Left cardiac atrium (tissue), 4 donors: ENCODE measurements at regions of chr22 and their contacts with region 1.

Region 1: DNA sequence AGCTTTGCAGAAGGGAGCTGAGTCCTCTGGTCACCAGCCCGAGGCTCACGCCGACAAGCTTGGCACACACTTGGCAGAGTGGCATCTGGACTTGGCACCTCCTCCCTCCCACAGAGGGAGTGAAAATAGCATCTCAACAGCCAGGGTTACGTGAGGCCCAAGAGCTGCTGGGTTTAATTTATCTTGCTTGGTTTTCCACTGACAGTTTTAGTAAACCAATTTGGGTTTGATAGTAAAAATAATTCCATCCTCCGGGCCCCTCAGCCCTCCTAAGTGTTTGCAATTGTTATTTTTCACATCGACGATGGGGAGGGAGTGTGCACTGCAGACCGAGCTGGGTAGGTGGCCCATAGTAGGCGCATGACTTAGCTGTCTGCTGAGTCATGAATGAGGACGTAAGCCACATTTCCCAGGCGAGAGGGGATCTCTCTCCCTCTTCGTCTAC is 107.6 kb upstream of the ASPHD2 start:
- DNase-seq: peak; percentile 41
- ATAC-seq: peak; percentile 94 to 98

Region 2: GRCh38 chr22:26086359-26086758 is 235.1 kb before region 1 on chr22:
- intact Hi-C with region 1: loop called in 1 of 2 experiments (anchors 10 kb)
- DNase-seq: no peak
- ATAC-seq: no peak

Region 3: GRCh38 chr22:26172389-26172990 is 149.0 kb before region 1 on chr22:
- intact Hi-C with region 1: loop called in 1 of 2 experiments (anchors 10 kb)
- DNase-seq: peak; percentile 32
- ATAC-seq: no peak

Region 4: DNA sequence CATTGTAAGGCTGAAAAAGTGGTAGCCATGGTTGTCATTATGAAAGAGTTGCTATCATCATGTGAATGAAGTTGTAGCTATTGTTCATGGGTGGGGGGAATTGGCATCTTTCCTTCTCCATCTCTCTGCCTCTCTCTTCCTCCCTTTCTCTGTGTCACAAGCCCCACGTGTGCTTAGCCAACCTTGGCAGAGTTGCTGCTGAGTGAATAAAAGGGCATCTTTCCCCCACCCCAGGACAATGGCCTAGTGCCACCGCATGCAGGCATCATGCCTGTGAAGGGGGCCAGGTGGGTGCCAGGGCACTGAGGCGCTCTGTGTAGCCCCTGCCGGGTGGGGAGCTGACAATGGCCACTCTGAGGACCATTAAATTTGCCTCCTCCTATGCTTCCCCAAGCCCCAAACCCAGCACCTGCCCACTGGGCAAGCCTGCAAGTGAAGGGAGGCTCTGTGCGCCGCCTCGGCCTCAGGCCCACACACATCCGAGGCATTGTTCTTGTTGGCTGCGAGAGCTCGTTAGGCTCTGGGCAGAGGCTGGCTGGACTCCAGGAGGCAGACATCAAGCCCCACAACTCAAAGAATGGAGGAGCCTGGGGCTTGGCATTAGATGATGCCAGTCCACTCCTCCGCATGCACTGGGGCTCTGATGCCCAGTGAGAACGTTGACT is 48.3 kb before region 1 on chr22:
- intact Hi-C with region 1: no loop called
- DNase-seq: no peak
- ATAC-seq: no peak

Region 5: GRCh38 chr22:26483439-26484359 is 162.2 kb after region 1 on chr22 and contains the starts of genes HPS4 and SRRD:
- intact Hi-C with region 1: no loop called
- DNase-seq: peak; percentile 90
- ATAC-seq: peak; percentile 95
- total RNA-seq, gene HPS4: 12.2 to 13.2 TPM
- total RNA-seq, gene SRRD: 14.9 to 23.7 TPM